ENCODE measurements at regions of chr12 and their contacts with region 1.

Region 1: DNA sequence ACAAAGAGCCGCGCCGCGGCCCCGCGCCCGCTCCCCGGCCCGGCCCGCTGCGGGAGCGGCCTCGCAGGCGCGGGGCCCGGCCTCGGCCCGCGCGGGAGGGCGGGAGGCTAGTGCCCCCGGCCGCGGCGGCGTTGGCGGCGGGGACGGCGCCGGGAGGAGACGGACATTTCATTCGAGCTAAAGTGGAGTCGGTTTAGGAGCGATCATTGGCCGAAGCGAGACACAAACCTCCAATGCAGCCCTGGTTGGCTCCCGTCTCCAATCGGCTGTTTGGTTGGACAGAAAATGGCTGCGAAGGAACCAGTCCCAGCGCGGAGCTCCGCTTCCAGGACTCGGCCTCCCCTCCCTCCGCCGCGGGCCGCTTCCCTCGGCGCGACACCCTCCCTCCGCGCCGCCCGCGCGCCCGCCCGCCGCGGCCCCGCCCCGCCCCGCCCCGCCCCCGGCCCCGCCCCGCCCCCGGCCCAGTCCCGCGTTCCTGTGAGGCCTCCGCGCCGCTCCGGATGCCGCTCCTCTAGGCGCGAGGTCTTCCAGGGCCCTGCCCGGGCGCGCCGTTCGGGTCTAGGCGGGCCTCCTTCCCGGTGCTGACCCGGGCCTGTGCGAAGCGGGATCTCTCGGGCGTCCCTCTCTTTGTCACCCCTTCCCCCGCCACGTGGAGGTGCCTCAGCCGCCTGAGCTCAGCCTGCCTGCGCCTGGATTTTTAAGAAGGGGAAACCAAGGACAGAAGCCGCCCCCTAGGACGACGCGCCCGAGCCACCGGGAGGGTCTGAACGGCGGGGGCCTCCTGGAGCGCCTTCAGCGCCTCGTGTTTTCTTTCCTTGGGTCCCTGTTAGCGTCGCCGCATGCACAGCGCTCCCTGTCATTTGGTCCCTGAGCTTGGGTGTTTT is at the start of gene NFYB:
- DNase-seq: peak; percentile 90
- ATAC-seq: peak; percentile 94
- H3K4me3 Mint-ChIP-seq: peak within 1 kb of the TSS; percentile 89
- H3K27ac Mint-ChIP-seq: peak within 1 kb of the TSS; percentile 85
- H3K4me1 Mint-ChIP-seq: peaks cover 21% of the 10 kb centered on the region
- H3K27me3 Mint-ChIP-seq: no peaks in the 10 kb centered on the region
- CTCF ChIP-seq: no peak
- total RNA-seq, gene NFYB: 17.0 and 17.1 TPM in 2 replicates

Region 2: GRCh38 chr12:103936679-103937078 is 201.5 kb before region 1 on chr12:
- CTCF ChIA-PET with region 1: no interaction called
- POLR2A ChIA-PET with region 1: no interaction called
- intact Hi-C with region 1: no loop called
- DNase-seq: no peak
- ATAC-seq: no peak
- H3K4me3 Mint-ChIP-seq: no peak overlapping the region
- H3K27ac Mint-ChIP-seq: peak overlapping the region; percentile 37
- H3K4me1 Mint-ChIP-seq: peaks cover 43% of the 10 kb centered on the region
- H3K27me3 Mint-ChIP-seq: no peaks in the 10 kb centered on the region
- CTCF ChIP-seq: no peak

Region 3: DNA sequence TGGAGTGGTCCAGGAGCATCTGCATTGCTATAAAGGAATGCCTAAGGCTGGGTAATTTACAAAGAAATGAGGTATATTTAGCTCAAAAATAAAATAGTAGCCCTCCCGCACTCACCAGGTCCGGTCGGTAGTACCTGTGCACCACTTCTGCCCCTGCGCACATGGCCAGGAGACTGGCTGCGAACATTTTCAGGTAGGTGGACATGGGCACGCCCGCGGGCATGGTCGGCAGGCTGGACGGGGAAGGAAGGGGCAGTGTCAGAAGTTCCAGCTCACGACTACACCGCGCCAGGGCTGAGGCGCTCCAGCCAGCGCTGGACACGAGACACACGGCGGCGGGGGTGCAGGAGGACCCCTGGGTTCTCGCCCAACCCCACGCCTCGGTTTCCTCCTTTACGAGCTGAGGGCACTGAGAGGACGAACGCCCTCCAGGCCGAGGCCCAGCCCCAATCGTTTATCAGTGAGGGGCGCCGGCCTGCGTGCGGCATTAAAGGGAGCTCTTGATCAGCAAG is 181.6 kb before region 1 on chr12:
- CTCF ChIA-PET with region 1: no interaction called
- POLR2A ChIA-PET with region 1: interaction called, 10 read pairs
- intact Hi-C with region 1: no loop called
- DNase-seq: no peak
- ATAC-seq: no peak
- H3K4me3 Mint-ChIP-seq: peak overlapping the region; percentile 99
- H3K27ac Mint-ChIP-seq: peak overlapping the region; percentile 97
- H3K4me1 Mint-ChIP-seq: peaks cover 27% of the 10 kb centered on the region
- H3K27me3 Mint-ChIP-seq: no peaks in the 10 kb centered on the region
- CTCF ChIP-seq: no peak